ENCODE measurements at regions of chrX and their contacts with region 1.

Region 1: GRCh38 chrX:47523297-47523696 is 37.7 kb upstream of the ARAF start:
- DNase-seq: peak; percentile 91
- H3K4me3 ChIP-seq: peak overlapping the region; percentile 47 to 64
- H3K27ac ChIP-seq: no peak overlapping the region; a peak in 1 of 4 replicates
- H3K4me1 ChIP-seq: no peaks in the 10 kb centered on the region
- H3K27me3 ChIP-seq: no peaks in the 10 kb centered on the region; the same call in 1 of the 2 replicates
- CTCF ChIP-seq: peak; percentile 76
- EP300 ChIP-seq: no peak
- RAD21 ChIP-seq: peak; percentile 86

Region 2: GRCh38 chrX:47193475-47194193 is 329.7 kb before region 1 on chrX and contains the start of gene UBA1:
- CTCF ChIA-PET with region 1: interaction called, 26 read pairs
- POLR2A ChIA-PET with region 1: interaction called, 4 read pairs
- DNase-seq: peak; percentile 95
- H3K4me3 ChIP-seq: peak within 1 kb of the TSS; percentile 83 to 96
- H3K27ac ChIP-seq: peak within 1 kb of the TSS; percentile 89 to 93
- H3K4me1 ChIP-seq: peaks cover 16 to 36% of the 10 kb centered on the region in 2 experiments
- H3K27me3 ChIP-seq: no peaks in the 10 kb centered on the region
- CTCF ChIP-seq: peak; percentile 88
- EP300 ChIP-seq: no peak
- RAD21 ChIP-seq: peak; percentile 97
- polyA plus RNA-seq, gene UBA1: 249 and 283 TPM in 2 replicates

Region 3: DNA sequence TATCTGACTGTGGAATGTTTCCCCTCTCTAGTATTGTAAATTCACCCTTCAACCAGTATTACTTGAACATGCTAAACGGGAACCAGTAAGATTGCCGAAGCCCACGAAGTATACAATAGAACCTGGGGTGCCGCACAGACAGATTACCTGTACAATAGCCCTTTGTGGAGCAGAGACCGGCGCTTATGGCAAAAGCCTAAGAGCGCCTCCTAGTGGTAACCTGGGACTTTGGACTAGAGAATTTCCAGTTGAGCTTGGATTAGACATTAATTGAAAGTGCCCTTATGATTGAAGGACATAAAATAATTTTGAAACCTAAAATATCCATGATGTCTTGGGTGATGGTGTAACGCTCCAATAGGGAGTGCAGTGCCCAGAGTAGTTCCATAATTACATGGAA is 138.8 kb before region 1 on chrX:
- CTCF ChIA-PET with region 1: interaction called, 23 read pairs
- POLR2A ChIA-PET with region 1: interaction called, 3 read pairs
- DNase-seq: peak; percentile 54
- H3K4me3 ChIP-seq: peak overlapping the region in 1 of 2 experiments; percentile 23; a peak in 1 of 4 replicates
- H3K27ac ChIP-seq: no peak overlapping the region
- H3K4me1 ChIP-seq: no peaks in the 10 kb centered on the region
- H3K27me3 ChIP-seq: no peaks in the 10 kb centered on the region; the same call in 1 of the 2 replicates
- CTCF ChIP-seq: peak; percentile 86
- EP300 ChIP-seq: no peak
- RAD21 ChIP-seq: peak; percentile 84

Region 4: DNA sequence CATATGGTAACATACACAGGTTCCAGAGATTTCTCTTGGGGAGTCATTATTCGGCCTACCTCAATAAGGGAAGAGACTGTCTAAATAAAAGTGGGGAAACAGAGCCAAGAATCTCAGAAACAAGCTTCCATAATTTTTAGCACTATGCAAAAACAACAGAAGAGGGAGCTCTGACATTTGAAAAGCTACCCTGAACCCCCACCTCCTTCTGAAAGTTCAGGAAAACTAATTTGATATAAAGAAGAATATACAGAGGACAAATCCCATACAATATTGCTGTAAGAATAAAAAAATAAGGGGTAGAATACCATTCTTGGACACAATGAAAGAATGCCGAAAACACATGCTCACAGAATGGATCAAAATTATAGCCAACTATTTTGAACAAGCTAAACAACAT is 26.0 kb before region 1 on chrX:
- CTCF ChIA-PET with region 1: interaction called, 107 read pairs
- POLR2A ChIA-PET with region 1: interaction called, 4 read pairs
- DNase-seq: peak; percentile 30
- H3K4me3 ChIP-seq: no peak overlapping the region
- H3K27ac ChIP-seq: no peak overlapping the region
- H3K4me1 ChIP-seq: peaks cover 0 to 3% of the 10 kb centered on the region in 2 experiments; a peak in 1 of 4 replicates
- H3K27me3 ChIP-seq: no peaks in the 10 kb centered on the region
- CTCF ChIP-seq: peak; percentile 60
- EP300 ChIP-seq: no peak
- RAD21 ChIP-seq: peak; percentile 75

Region 5: GRCh38 chrX:47507153-47507867 is 16.0 kb before region 1 on chrX:
- CTCF ChIA-PET with region 1: interaction called, 107 read pairs
- POLR2A ChIA-PET with region 1: no interaction called
- DNase-seq: no peak
- H3K4me3 ChIP-seq: no peak overlapping the region
- H3K27ac ChIP-seq: no peak overlapping the region
- H3K4me1 ChIP-seq: no peaks in the 10 kb centered on the region
- H3K27me3 ChIP-seq: peaks cover 5% of the 10 kb centered on the region; the same call in 1 of the 2 replicates
- CTCF ChIP-seq: no peak
- EP300 ChIP-seq: no peak
- RAD21 ChIP-seq: no peak

Region 6: GRCh38 chrX:47540754-47541538 is 17.6 kb after region 1 on chrX:
- CTCF ChIA-PET with region 1: interaction called, 44 read pairs
- POLR2A ChIA-PET with region 1: interaction called, 3 read pairs
- DNase-seq: peak; percentile 80
- H3K4me3 ChIP-seq: no peak overlapping the region; a peak in 1 of 4 replicates
- H3K27ac ChIP-seq: peak overlapping the region; percentile 56 to 64; a peak in 3 of 4 replicates
- H3K4me1 ChIP-seq: peaks cover 0 to 6% of the 10 kb centered on the region in 2 experiments; a peak in 1 of 4 replicates
- H3K27me3 ChIP-seq: no peaks in the 10 kb centered on the region
- CTCF ChIP-seq: peak; percentile 82
- EP300 ChIP-seq: peak in 1 of 2 experiments; percentile 57; a peak in 1 of 4 replicates
- RAD21 ChIP-seq: peak; percentile 70

Measured in SK-N-SH (cell line).